ENCODE measurements at regions of chr9 and their contacts with region 1.

Region 1: DNA sequence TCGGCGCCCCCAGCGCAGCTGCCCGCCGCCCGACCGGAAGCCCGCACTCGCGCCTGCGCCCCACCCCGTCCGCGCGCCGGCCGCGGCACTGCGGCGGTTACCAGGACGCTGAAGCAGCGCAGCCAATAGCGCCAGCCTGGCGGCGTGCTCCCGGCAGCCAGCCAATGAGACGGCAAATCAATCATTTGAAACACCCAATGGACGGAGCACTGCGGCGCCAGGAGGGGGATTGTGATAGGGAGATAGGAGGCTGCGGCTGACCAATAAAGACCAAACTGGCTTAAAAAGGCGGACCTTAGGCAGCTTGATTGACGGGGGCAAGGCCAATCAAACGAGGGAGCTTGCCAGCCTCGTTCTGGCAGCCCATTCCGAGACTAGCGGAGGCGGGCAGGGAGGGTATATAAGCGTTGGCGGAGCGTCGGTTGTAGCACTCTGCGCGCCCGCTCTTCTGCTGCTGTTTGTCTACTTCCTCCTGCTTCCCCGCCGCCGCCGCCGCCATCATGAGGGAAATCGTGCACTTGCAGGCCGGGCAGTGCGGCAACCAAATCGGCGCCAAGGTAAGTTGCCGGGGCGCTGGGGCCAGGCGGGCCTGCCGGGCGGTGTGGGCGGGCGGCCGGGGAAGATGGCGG is at the start of gene TUBB4B:
- DNase-seq: peak; percentile 99 to 100
- ATAC-seq: peak; percentile 61 to 78
- H3K4me3 ChIP-seq: peak within 1 kb of the TSS; percentile 91
- H3K27ac ChIP-seq: peak within 1 kb of the TSS; percentile 98 to 99
- H3K4me1 ChIP-seq: peaks cover 54% of the 10 kb centered on the region
- CTCF ChIP-seq: no peak
- EP300 ChIP-seq: no peak
- POLR2A ChIP-seq: peak; percentile 100
- RAD21 ChIP-seq: no peak
- polyA plus RNA-seq, gene TUBB4B: 256 and 268 TPM in 2 replicates

Region 2: DNA sequence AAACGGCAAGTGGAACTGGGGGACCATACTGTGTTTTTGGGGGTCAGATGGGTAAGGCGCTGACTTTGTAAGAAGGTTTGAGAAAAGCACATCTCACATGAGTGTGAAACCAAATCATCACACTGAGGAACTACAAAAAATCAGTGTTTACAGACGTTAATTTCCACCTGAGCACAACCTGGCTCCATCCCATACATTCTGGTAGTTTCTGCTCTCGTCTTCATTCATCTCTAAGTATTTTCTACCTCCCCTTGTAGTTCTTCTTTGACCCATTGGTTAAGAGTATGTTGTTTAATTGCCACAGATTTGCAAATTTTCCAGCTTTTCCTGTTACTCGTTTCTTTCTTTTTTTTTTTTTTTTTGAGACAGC is 117.5 kb before region 1 on chr9:
- CTCF ChIA-PET with region 1: interaction called, 19 read pairs
- POLR2A ChIA-PET with region 1: interaction called, 4 read pairs
- DNase-seq: no peak
- ATAC-seq: no peak
- H3K4me3 ChIP-seq: no peak overlapping the region
- H3K27ac ChIP-seq: no peak overlapping the region
- H3K4me1 ChIP-seq: peaks cover 23% of the 10 kb centered on the region
- CTCF ChIP-seq: no peak
- EP300 ChIP-seq: no peak
- POLR2A ChIP-seq: no peak
- RAD21 ChIP-seq: no peak

Region 3: GRCh38 chr9:137168905-137169856 is 71.8 kb before region 1 on chr9:
- CTCF ChIA-PET with region 1: interaction called, 11 read pairs
- POLR2A ChIA-PET with region 1: interaction called, 10 read pairs
- DNase-seq: peak; percentile 74 to 84
- ATAC-seq: peak; percentile 37 to 57
- H3K4me3 ChIP-seq: peak overlapping the region; percentile 47
- H3K27ac ChIP-seq: peak overlapping the region; percentile 59 to 78
- H3K4me1 ChIP-seq: peaks cover 27% of the 10 kb centered on the region
- CTCF ChIP-seq: no peak
- EP300 ChIP-seq: no peak
- POLR2A ChIP-seq: peak; percentile 39
- RAD21 ChIP-seq: no peak

Region 4: GRCh38 chr9:137194388-137194787 is 46.6 kb before region 1 on chr9:
- CTCF ChIA-PET with region 1: interaction called, 25 read pairs
- POLR2A ChIA-PET with region 1: interaction called, 11 read pairs
- DNase-seq: no peak
- ATAC-seq: no peak
- H3K4me3 ChIP-seq: no peak overlapping the region
- H3K27ac ChIP-seq: peak overlapping the region in 1 of 2 experiments; percentile 22; a peak in 1 of 6 replicates
- H3K4me1 ChIP-seq: peaks cover 44% of the 10 kb centered on the region
- CTCF ChIP-seq: no peak
- EP300 ChIP-seq: no peak
- POLR2A ChIP-seq: no peak
- RAD21 ChIP-seq: no peak

Region 5: DNA sequence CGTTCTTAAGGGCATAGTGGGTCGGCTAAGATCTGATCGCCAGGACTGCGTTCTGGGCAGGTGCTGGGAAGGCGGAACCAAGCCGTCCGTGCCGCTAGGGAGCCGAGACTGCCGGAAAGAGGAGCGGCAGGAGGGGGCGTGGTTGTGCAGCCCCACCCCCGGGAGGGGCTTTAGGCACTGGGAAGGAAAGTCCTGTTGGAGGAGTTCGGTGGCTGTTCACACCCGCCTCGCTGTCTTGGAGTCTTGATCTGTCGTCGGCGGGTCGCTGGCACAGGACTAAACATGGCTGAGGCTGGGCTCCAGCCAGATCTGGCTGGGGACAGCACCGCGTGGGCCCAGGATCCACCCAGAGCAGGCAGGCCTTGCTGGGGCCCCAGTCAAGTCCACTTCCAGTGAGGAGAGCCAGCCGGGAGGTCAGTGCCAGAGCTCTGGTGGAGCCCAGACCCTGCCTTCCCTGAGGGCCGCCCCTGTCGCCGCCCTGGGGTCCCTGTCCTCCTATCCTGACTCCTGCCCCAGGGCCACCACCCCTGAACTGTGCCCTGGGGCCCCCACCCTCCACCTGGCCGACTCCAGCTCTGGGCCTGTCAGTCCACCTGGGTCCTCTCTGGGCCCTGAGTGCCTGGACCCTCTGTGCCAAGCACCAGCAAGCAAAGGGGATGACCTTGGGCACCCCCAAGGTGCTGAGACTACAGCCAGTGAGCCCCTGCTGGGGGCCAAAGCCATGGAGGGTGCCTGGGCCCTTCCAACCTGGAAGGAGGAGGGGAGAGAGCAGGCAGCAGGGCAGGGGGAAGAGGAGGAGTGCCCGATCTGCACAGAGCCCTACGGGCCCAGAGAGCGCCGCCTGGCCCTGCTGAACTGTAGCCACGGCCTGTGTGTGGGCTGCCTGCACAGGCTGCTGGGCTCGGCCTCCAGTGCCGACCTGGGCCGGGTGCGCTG is 23.4 kb before region 1 on chr9:
- CTCF ChIA-PET with region 1: interaction called, 102 read pairs
- POLR2A ChIA-PET with region 1: interaction called, 37 read pairs
- DNase-seq: no peak
- ATAC-seq: peak in 1 of 2 experiments; percentile 14; a peak in 3 of 6 replicates
- H3K4me3 ChIP-seq: no peak overlapping the region
- H3K27ac ChIP-seq: peak overlapping the region in 1 of 2 experiments; percentile 76; a peak in 3 of 6 replicates
- H3K4me1 ChIP-seq: peaks cover 33% of the 10 kb centered on the region
- CTCF ChIP-seq: no peak
- EP300 ChIP-seq: no peak
- POLR2A ChIP-seq: no peak
- RAD21 ChIP-seq: no peak

Region 6: GRCh38 chr9:137254624-137255447 is 13.9 kb after region 1 on chr9 and contains the start of gene NELFB:
- CTCF ChIA-PET with region 1: interaction called, 236 read pairs
- POLR2A ChIA-PET with region 1: interaction called, 97 read pairs
- DNase-seq: peak; percentile 83 to 98
- ATAC-seq: peak; percentile 71 to 83
- H3K4me3 ChIP-seq: peak within 1 kb of the TSS; percentile 93
- H3K27ac ChIP-seq: peak within 1 kb of the TSS; percentile 90 to 98
- H3K4me1 ChIP-seq: peaks cover 20% of the 10 kb centered on the region
- CTCF ChIP-seq: no peak
- EP300 ChIP-seq: 0 out of 5 replicates have a peak, but pooled peaks of 1 of the 2 experiments have one; percentile 36
- POLR2A ChIP-seq: peak; percentile 90
- RAD21 ChIP-seq: no peak
- polyA plus RNA-seq, gene NELFB: 31.8 and 33.8 TPM in 2 replicates

Measured in A549 (cell line).